Adrenal gland (tissue), 19 donors: ENCODE measurements at regions of chr7 and their contacts with region 1.

Region 1: DNA sequence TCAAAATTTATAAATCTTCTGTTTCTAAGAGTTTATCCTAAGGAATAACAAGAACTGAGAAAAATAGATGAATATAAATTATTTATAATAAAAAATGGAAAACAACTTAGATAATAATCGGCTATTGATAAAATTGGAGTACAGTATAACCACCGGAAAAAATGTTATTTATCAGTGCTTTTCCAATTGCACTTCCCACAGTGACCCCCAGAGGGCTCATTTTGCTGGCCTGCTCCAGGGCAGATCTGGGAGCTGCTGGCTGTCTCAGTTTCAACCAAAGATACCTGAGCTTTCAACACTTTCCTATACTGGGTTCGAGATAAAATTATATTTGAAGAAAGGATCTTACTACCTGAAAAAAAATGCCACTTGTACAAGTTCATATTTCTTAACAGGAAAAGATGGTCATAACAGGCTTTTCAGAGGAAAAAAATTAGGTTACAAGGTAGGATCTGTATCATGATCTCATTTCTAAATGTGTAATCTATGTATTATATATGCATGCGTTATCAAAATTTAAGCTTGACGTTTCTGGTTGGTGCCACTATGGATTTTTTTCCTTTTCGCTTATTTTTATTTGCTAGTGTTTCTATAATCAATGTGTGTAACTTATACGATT is 165.7 kb downstream of the NPSR1 start:
- DNase-seq: peak; percentile 55 to 83 (median 69)
- H3K4me3 ChIP-seq: no peak overlapping the region
- H3K27ac ChIP-seq: no peak overlapping the region
- H3K4me1 ChIP-seq: no peaks in the 10 kb centered on the region
- H3K27me3 ChIP-seq: no peaks in the 10 kb centered on the region
- CTCF ChIP-seq: peak; percentile 51 to 95 (median 77)
- POLR2A ChIP-seq: no peak

Region 2: DNA sequence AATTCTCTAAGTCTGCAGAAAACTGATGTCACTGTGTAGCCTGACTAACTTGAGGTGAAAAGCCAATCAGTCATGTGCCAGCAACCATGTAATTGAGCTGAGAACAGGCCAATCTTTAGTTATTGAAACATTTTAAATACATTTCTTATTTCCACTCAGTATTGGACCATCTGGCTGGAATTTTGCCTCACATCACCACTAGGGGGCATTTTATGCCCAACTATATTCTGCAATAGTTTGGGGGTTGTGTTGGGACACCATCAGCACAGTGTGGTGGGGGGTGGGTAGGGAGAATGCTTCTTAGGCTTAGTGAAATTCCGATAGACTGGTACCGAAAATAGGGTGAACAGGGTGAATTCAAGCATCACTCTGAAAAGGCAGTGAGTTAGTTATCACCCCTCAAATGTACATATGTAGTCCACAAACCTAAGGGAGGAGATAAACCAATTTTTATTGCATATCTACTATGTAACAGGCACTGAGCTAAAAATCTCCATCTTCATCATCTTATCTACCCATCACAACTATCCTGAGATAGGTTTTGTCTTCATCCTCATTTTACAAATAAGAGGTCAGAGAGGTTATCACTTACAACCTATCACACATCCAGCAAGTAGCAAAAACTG is 147.9 kb before region 1 on chr7:
- intact Hi-C with region 1: loop called in 1 of 2 experiments (anchors 10 kb)
- DNase-seq: peak in 5 of 7 donors; percentile 16 to 60 (median 38)
- H3K4me3 ChIP-seq: no peak overlapping the region
- H3K27ac ChIP-seq: no peak overlapping the region
- H3K4me1 ChIP-seq: no peaks in the 10 kb centered on the region
- H3K27me3 ChIP-seq: no peaks in the 10 kb centered on the region
- CTCF ChIP-seq: peak; percentile 48 to 62 (median 57)
- POLR2A ChIP-seq: no peak

Region 3: DNA sequence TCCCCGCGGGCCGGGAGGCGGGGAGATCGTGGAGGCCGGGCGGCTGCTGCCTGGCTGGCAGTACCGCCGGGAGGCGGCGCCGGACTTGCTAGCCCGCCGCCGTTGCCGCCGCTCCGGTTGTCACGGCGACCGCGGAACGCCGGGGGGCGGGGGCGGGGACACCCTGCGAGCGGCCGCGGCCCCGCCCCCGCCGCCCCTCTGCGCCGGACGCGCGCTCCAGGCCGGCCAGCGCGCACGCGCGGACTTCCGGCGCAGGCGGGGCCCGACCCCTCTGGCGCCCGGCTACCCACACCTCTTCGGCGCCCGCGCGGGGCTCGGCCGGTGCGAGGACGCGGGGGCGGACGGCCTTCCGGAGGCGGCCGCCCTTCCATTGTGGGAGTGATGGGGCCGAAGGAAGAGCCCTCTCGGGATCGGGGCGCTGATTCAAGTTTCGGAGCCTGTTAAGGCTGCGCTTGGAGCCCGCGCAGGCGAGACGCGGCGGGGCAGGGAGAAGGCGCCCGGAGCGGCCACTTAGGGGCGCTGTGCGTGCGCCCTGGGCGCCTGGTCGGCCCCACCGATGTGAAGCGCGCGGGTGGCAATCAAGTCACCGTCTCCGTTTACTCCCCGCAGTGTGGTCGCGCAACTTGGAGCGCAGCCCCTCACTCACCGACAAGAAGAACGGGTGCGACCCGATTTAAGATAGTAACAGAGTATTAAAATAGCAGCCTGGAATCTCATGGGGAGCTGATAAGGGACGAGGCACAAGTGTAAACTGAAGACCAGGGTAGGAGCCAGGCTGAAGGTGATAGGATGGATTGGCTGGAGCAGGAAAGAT is 214.0 kb after region 1 on chr7:
- intact Hi-C with region 1: loop called in 1 of 2 experiments (anchors 10 kb)
- DNase-seq: peak; percentile 94 to 98 (median 95)
- H3K4me3 ChIP-seq: peak overlapping the region; percentile 27 to 87 (median 78)
- H3K27ac ChIP-seq: peak overlapping the region; percentile 65 to 91 (median 90)
- H3K4me1 ChIP-seq: peaks cover 17 to 18% of the 10 kb centered on the region in 2 donors
- H3K27me3 ChIP-seq: no peaks in the 10 kb centered on the region
- CTCF ChIP-seq: peak; percentile 54 to 83 (median 78)
- POLR2A ChIP-seq: no peak